CD8-positive, alpha-beta T cell (primary cell): ENCODE measurements at regions of chr7 and their contacts with region 1.

Region 1: GRCh38 chr7:140249036-140249806 is 72.4 kb upstream of the KDM7A start:
- DNase-seq: no peak
- ATAC-seq: no peak
- H3K4me3 ChIP-seq: no peak overlapping the region
- H3K4me3 Mint-ChIP-seq: no peak overlapping the region
- H3K27ac ChIP-seq: no peak overlapping the region
- H3K27ac Mint-ChIP-seq: no peak overlapping the region
- H3K4me1 ChIP-seq: peaks cover 12% of the 10 kb centered on the region
- H3K4me1 Mint-ChIP-seq: peaks cover 14% of the 10 kb centered on the region
- H3K27me3 ChIP-seq: no peaks in the 10 kb centered on the region
- H3K27me3 Mint-ChIP-seq: no peaks in the 10 kb centered on the region
- CTCF ChIP-seq: no peak

Region 2: DNA sequence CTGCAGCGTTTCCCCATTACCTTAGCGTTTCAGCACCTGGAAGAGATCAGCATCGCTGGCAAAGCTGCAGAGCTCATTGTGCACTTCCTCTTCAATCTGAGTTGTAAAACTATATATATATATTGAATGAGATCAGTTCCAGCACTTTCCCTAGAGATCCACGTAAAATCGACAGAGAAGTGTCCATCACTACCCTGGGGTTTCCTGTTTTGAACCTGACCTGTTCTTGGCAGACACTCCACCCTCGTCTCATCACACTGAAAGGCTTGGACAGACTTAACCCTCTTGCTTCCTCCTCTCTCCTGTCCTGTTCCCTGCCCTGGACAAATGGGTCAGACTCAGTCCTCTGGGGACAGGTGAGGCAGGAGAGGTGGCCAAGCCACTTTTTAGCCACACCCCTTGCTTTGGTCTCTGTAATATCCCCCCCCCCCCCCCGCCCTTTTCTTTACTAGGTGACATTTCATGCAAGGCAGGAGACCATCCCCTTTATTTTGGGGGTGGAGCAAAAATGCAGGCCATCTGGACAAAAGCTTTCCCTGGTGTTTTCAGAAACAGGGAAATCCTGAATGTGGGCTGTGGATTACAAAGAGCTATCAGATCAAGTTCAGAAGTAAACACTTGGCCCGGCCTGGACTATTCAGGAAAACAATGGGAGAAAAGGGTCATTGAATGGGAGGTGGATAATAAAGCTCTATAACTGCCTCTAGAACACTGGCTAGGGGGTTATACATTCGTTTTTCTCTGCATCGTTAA is 11.3 kb after region 1 on chr7:
- CTCF ChIA-PET with region 1: interaction called, 3 read pairs
- POLR2A ChIA-PET with region 1: interaction called, 23 read pairs
- intact Hi-C with region 1: no loop called
- DNase-seq: no peak
- ATAC-seq: no peak
- H3K4me3 ChIP-seq: no peak overlapping the region
- H3K4me3 Mint-ChIP-seq: no peak overlapping the region
- H3K27ac ChIP-seq: no peak overlapping the region
- H3K27ac Mint-ChIP-seq: peak overlapping the region; percentile 32
- H3K4me1 ChIP-seq: peaks cover 47% of the 10 kb centered on the region
- H3K4me1 Mint-ChIP-seq: peaks cover 51% of the 10 kb centered on the region
- H3K27me3 ChIP-seq: no peaks in the 10 kb centered on the region
- H3K27me3 Mint-ChIP-seq: no peaks in the 10 kb centered on the region
- CTCF ChIP-seq: no peak

Region 3: GRCh38 chr7:140297192-140297591 is 48.0 kb after region 1 on chr7:
- CTCF ChIA-PET with region 1: no interaction called
- POLR2A ChIA-PET with region 1: no interaction called
- intact Hi-C with region 1: loop called in 1 of 2 experiments (anchors 5 kb)
- DNase-seq: peak in 2 of 9 experiments; percentile 10 to 23
- ATAC-seq: no peak
- H3K4me3 ChIP-seq: no peak overlapping the region
- H3K4me3 Mint-ChIP-seq: no peak overlapping the region
- H3K27ac ChIP-seq: no peak overlapping the region
- H3K27ac Mint-ChIP-seq: no peak overlapping the region
- H3K4me1 ChIP-seq: no peaks in the 10 kb centered on the region
- H3K4me1 Mint-ChIP-seq: peaks cover 6% of the 10 kb centered on the region
- H3K27me3 ChIP-seq: no peaks in the 10 kb centered on the region
- H3K27me3 Mint-ChIP-seq: no peaks in the 10 kb centered on the region
- CTCF ChIP-seq: no peak

Region 4: GRCh38 chr7:140435252-140435895 is 186.2 kb after region 1 on chr7:
- CTCF ChIA-PET with region 1: no interaction called
- POLR2A ChIA-PET with region 1: no interaction called
- intact Hi-C with region 1: no loop called
- DNase-seq: no peak
- ATAC-seq: no peak
- H3K4me3 ChIP-seq: no peak overlapping the region
- H3K4me3 Mint-ChIP-seq: no peak overlapping the region
- H3K27ac ChIP-seq: no peak overlapping the region
- H3K27ac Mint-ChIP-seq: no peak overlapping the region
- H3K4me1 ChIP-seq: no peaks in the 10 kb centered on the region
- H3K4me1 Mint-ChIP-seq: no peaks in the 10 kb centered on the region
- H3K27me3 ChIP-seq: no peaks in the 10 kb centered on the region
- H3K27me3 Mint-ChIP-seq: no peaks in the 10 kb centered on the region
- CTCF ChIP-seq: no peak